Activated CD8-positive, alpha-beta T cell treated with anti-CD3 and anti-CD28 coated beads for 36 hours (primary cell): ENCODE measurements at regions of chr4 and their contacts with region 1.

Region 1: DNA sequence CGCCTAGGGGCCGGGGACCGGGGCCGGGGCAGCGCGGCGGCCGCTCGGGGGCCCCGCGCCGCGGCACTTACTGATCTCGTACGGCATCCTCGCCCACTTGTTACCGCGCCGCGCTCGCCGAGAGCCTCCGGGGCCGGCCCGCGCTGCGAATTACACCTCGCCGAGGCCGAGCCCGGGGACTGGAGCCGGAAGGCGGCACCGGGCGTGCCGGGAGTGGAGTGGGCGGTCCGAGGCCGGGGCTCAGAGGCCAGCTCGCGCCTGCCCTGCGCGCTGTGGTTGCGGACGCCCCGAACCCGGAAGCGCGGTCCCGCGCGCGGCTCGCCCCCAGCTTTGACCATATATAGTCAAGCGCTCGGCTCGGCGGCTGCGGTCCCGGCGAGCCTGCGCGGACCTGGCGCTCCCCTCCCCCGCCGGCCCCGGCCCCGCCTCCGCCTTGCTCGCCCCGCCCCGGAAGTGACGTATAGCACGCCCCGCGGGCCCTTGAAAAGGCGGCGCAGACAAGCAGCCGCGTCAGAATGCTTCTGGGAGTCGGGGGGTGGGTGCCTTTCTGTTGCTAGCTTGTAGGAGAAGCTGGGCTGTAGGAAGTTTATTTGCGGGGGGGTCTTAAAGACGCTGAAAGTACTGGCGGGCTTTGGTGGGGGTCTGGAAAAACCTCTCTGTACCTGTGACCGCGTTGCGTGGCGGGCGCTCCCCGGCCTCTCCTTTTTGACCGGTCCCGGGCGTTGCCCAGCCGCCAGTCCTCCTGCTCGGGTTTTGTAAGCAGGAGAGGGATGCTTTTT is at the start of gene WDR1:
- DNase-seq: peak; percentile 90
- ATAC-seq: peak; percentile 78
- H3K4me3 Mint-ChIP-seq: peak within 1 kb of the TSS; percentile 97
- H3K27ac Mint-ChIP-seq: peak within 1 kb of the TSS; percentile 98
- H3K4me1 Mint-ChIP-seq: peaks cover 69% of the 10 kb centered on the region
- H3K27me3 Mint-ChIP-seq: no peaks in the 10 kb centered on the region
- CTCF ChIP-seq: no peak
- total RNA-seq, gene WDR1: 390 to 393 TPM

Region 2: GRCh38 chr4:10096201-10096977 is 20.4 kb before region 1 on chr4:
- CTCF ChIA-PET with region 1: interaction called, 11 read pairs
- POLR2A ChIA-PET with region 1: interaction called, 403 read pairs
- intact Hi-C with region 1: no loop called
- DNase-seq: peak; percentile 95
- ATAC-seq: peak; percentile 78
- H3K4me3 Mint-ChIP-seq: peak overlapping the region; percentile 28
- H3K27ac Mint-ChIP-seq: peak overlapping the region; percentile 98
- H3K4me1 Mint-ChIP-seq: peaks cover 99% of the 10 kb centered on the region
- H3K27me3 Mint-ChIP-seq: no peaks in the 10 kb centered on the region
- CTCF ChIP-seq: no peak

Region 3: DNA sequence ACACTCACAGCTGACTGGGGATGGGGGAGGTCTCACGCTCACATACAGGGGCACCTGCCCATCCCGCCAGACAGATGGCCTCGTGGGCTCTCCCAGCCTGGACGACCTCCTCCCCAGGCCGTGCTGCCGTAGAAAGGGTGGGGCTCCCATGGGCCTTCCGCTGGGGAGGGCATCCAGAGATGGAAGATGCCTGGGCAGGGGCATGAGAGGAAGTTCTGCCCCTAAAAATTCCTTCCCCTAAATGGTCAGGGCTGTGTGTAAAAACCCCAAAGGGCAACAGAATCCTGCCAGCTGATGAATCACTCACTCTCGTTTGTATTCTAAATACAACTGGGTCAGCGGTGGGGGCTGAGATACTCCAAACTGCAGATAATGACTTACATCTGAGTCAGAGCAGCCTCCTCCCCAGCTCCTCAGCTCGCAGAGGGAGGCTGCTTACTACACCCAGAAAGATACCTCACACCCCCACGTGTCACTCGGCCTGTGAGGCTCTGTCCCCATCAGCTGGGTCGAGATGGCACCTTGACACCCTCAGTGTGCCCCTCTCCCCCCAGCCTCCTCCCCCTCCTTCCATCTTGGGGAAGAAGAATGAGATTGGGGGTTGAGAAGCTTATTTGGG is 10.2 kb before region 1 on chr4:
- CTCF ChIA-PET with region 1: interaction called, 12 read pairs
- POLR2A ChIA-PET with region 1: interaction called, 139 read pairs
- intact Hi-C with region 1: no loop called
- DNase-seq: peak; percentile 95
- ATAC-seq: peak; percentile 89
- H3K4me3 Mint-ChIP-seq: peak overlapping the region; percentile 71
- H3K27ac Mint-ChIP-seq: peak overlapping the region; percentile 90
- H3K4me1 Mint-ChIP-seq: peaks cover 98% of the 10 kb centered on the region
- H3K27me3 Mint-ChIP-seq: no peaks in the 10 kb centered on the region
- CTCF ChIP-seq: no peak

Region 4: GRCh38 chr4:10129196-10130177 is 12.7 kb after region 1 on chr4:
- CTCF ChIA-PET with region 1: interaction called, 3 read pairs
- POLR2A ChIA-PET with region 1: interaction called, 22 read pairs
- intact Hi-C with region 1: no loop called
- DNase-seq: no peak
- ATAC-seq: no peak
- H3K4me3 Mint-ChIP-seq: no peak overlapping the region
- H3K27ac Mint-ChIP-seq: no peak overlapping the region
- H3K4me1 Mint-ChIP-seq: peaks cover 11% of the 10 kb centered on the region
- H3K27me3 Mint-ChIP-seq: no peaks in the 10 kb centered on the region
- CTCF ChIP-seq: no peak

Region 5: DNA sequence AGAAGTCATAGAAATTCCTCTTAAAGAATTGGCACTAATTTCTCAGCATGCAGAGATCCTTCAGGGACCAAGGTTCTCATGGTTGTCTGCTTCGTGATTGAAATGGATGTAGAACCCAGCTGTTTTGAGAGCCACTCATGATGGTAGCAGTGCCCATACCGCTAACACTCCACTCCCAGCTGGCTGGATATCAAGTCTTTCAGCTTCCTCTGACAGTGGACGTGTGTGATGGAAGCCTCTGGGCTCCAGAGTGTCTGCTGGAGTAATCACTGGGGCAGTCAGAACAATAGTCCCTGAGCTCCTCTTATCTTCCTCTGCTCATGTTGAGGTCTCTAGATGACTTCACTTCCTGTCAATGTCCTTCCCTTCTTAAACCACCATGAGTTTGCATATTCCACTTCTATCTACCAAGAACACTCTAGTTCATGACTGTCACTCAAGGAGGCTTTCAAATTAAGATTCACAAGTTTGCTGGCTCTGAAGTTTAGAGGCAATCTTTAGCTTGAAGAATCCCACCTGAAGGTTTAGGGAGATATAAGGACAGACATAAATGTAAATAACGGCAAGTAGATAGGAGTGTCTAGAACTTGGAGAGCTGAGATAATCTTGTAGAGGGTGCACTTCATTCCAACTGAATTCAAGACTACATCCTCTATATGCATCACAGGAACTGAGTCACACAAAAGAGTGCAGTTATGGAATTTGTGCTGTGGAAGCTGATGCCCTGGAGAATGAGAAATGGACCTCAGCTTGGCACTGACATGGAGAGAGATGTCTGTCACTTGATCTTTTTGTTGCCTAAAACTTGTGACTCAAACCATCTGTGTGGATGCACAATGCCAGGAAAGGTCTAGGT is 64.4 kb after region 1 on chr4:
- CTCF ChIA-PET with region 1: no interaction called
- POLR2A ChIA-PET with region 1: interaction called, 11 read pairs
- intact Hi-C with region 1: loop called (anchors 5 kb)
- DNase-seq: peak; percentile 61
- ATAC-seq: peak; percentile 94
- H3K4me3 Mint-ChIP-seq: peak overlapping the region; percentile 16
- H3K27ac Mint-ChIP-seq: peak overlapping the region; percentile 93
- H3K4me1 Mint-ChIP-seq: peaks cover 32% of the 10 kb centered on the region
- H3K27me3 Mint-ChIP-seq: no peaks in the 10 kb centered on the region
- CTCF ChIP-seq: no peak